ENCODE measurements at regions of chr7 and their contacts with region 1.

Region 1: DNA sequence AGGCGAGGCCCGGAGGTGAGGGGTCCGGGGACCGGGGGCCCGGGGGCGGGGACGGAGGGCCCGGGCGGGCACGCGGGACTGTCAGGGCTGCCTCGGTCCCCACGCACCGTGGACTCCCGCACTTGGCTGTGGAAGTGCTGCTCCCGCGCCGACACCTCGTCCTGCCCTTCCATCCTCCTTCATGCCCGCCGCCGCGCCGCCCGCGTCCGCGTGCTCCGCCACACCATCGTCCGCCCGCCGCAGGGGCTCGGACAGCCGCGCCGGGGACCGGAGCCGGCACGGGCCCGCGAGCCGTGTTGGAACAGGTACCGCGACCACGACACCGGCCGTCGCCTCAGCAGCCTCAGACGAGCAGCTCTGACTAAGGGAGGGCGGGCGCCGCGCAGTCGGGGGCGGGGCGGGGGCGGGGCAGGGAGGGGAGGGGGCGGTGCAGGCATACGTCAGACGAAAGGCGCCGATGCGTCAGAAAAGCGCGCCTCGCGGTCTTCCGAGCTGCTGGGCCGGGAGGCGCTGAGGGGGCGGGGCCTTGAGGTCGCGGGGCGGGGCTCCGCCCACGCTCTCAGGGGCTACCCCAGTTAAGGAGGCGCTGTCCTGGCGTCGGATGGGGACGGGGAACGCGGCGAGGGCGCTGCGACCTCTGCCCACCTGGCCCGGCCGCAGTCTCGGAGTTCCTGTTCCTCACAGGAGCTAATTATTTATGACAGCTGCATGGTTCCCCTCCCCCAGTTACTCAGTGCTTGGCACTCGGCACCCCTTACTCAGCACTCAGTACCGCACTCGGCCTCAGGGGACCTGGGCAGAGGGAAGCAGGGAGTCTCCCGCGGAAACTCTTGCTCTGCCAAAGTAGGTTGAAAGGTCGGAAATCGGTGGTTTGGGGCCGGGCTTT is at the start of gene LMBR1:
- DNase-seq: peak; percentile 63 to 96
- H3K4me3 ChIP-seq: peak within 1 kb of the TSS; percentile 84 to 94
- H3K27ac ChIP-seq: peak within 1 kb of the TSS; percentile 74 to 90
- H3K4me1 ChIP-seq: peaks cover 0 to 8% of the 10 kb centered on the region in 2 donors
- H3K27me3 ChIP-seq: no peaks in the 10 kb centered on the region
- CTCF ChIP-seq: peak; percentile 55 to 79 (median 60)
- total RNA-seq, gene LMBR1: 14.8 TPM

Region 2: DNA sequence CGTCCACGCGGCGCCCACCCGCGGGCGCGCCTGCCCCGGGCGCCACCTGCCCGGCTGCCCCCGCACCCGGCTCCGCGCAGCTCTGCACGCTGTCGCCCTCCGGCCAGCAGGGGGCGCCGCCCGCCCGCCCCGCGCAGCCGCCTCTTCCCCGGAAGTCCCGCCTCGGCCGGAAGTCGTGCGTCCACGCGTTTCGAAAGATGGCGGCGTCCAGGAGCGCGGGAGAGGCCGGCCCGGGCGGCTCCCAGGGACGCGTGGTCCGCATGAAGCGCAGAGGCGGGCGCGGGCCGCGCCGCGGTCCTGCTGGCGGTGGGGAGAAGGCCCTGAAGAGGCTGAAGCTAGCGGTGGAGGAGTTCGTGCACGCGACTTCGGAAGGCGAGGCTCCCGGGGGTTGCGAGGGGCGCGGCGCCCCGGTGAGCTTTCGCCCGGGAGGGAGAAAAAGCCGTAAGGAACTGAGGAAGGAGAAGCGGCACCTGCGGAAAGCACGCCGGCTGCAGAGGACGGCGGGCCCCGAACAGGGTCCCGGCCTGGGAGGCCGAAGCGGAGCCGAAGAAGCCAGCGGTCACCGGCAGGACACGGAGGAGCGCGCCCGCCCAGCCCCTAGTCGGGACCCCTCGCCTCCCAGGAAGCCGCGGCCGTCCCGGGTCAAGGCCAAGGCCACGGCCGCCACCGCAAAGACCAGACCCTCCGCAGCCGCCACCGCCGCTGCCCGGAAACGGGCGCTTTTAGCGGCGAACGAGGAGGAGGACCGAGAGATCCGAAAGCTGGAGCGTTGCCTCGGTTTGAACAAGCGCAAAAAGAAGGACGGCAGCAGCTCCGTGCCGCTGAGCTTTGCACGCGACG is 56.7 kb after region 1 on chr7 and contains the start of gene NOM1:
- intact Hi-C with region 1: loop called (anchors 2 kb)
- DNase-seq: peak; percentile 31 to 91
- H3K4me3 ChIP-seq: peak within 1 kb of the TSS; percentile 53 to 99
- H3K27ac ChIP-seq: peak within 1 kb of the TSS in 1 of 2 donors; percentile 41
- H3K4me1 ChIP-seq: peaks cover 10 to 23% of the 10 kb centered on the region in 2 donors
- H3K27me3 ChIP-seq: no peaks in the 10 kb centered on the region
- CTCF ChIP-seq: peak; percentile 59 to 93 (median 62)
- total RNA-seq, gene NOM1: 16.1 TPM

Region 3: GRCh38 chr7:157126921-157127320 is 233.9 kb after region 1 on chr7:
- intact Hi-C with region 1: no loop called
- DNase-seq: no peak
- H3K4me3 ChIP-seq: no peak overlapping the region
- H3K27ac ChIP-seq: no peak overlapping the region
- H3K4me1 ChIP-seq: no peaks in the 10 kb centered on the region
- H3K27me3 ChIP-seq: no peaks in the 10 kb centered on the region
- CTCF ChIP-seq: no peak

Region 4: DNA sequence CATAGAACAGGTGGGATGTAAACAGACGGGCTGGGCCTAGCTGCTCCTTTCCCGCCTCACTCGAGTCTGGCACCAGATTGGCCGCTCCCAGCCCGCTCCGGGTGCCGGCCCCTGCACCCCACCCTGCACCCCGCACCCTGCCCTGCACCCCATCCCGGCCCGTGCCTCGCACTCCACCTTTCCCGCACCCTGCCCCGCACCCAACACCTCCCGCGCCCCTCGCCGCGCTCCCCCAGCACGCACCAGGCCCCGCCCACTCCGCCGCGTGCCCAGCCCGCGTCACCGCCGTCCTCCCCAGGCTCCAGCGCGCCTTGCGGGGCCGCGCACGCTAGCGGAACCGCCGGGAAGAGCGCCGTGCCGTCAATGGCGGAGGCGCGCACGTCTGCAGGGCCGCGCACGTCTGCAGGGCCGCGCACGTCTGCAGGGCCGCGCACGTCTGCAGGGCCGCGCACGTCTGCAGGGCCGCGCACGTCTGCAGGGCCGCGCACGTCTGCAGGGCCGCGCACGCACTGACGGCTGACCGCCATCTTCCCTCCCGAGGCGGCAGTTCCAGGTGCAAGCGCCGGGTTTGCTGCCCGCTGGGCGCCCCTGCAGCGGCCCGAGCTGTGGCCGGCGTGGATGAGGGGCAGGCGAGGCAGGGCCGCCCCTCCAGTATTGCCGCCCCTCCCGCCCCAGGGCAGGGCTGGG is 245.5 kb after region 1 on chr7 and contains the start of gene UBE3C:
- intact Hi-C with region 1: loop called (anchors 5 kb)
- DNase-seq: peak; percentile 35 to 93
- H3K4me3 ChIP-seq: peak within 1 kb of the TSS; percentile 72 to 94
- H3K27ac ChIP-seq: peak within 1 kb of the TSS; percentile 87 to 90
- H3K4me1 ChIP-seq: peaks cover 9 to 16% of the 10 kb centered on the region in 2 donors
- H3K27me3 ChIP-seq: no peaks in the 10 kb centered on the region
- CTCF ChIP-seq: peak in 1 of 3 experiments; percentile 10
- total RNA-seq, gene UBE3C: 31.7 TPM

Region 5: GRCh38 chr7:158863611-158864506 is 1970.8 kb after region 1 on chr7:
- intact Hi-C with region 1: loop called (anchors 10 kb)
- DNase-seq: peak; percentile 23 to 84
- H3K4me3 ChIP-seq: peak overlapping the region; percentile 61 to 77
- H3K27ac ChIP-seq: peak overlapping the region; percentile 83
- H3K4me1 ChIP-seq: peaks cover 0 to 6% of the 10 kb centered on the region in 2 donors
- H3K27me3 ChIP-seq: no peaks in the 10 kb centered on the region
- CTCF ChIP-seq: no peak

Measured in ascending aorta (tissue), 2 donors.